ENCODE measurements at regions of chr1 and their contacts with region 1.

Region 1: DNA sequence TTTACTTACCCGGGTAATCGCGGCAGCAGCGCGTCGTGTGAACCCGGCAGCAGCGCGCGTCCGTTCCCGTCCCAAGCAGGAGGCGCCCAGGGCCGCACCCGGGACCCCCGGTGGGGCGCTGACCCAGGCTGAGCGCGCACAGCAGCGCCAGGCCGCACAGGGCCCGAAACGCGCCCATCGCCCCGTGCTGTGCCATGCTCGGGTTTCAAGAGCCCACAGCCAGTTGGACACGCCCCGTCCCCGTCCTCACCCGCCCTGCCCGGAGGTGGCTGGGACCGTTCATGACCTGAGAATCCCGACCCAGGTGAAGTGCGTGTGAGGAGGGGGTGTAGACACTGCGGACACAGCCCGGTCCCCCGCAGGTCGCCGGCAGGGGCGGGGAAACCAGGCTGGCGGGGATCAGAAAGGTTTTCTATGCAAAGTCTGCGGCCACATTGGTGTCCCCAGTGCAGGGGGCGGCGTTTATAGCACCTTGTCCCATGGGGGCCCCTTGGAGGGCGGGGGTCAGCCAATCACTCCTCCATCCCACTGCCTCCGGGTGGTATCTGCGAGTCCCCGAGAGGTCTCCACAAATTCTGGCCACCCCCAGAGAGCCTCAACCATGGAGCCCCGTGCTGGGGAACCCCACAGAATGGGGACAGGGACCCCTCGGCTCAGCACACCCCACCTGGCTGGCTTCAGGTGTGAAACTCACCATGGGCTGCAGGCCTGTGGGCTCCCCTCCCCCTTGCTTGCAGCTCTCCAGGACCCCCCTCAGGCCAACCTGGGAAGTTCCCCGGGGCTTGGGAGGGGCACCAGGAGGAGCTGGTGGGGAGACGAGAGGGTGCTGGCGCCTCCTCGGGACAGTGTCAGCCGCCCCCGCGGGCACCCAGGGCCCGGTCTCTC is at the start of gene TNFRSF18:
- DNase-seq: peak; percentile 47 to 64
- ATAC-seq: peak; percentile 11 to 17 (median 17)
- H3K4me3 ChIP-seq: peak within 1 kb of the TSS; percentile 41
- H3K4me3 Mint-ChIP-seq: peak within 1 kb of the TSS; percentile 80
- H3K27ac ChIP-seq: peak within 1 kb of the TSS; percentile 49
- H3K27ac Mint-ChIP-seq: peak within 1 kb of the TSS; percentile 93 to 98
- H3K4me1 ChIP-seq: peaks cover 73% of the 10 kb centered on the region
- H3K4me1 Mint-ChIP-seq: peaks cover 15 to 38% of the 10 kb centered on the region in 2 donors
- H3K27me3 ChIP-seq: no peaks in the 10 kb centered on the region
- H3K27me3 Mint-ChIP-seq: no peaks in the 10 kb centered on the region
- CTCF ChIP-seq: no peak
- total RNA-seq, gene TNFRSF18: 40.3 to 81.9 (median 54.7) TPM

Region 2: GRCh38 chr1:1173793-1174415 is 32.7 kb before region 1 on chr1 and contains the start of gene TTLL10:
- intact Hi-C with region 1: loop called (anchors 5 kb)
- DNase-seq: peak; percentile 37 to 80
- ATAC-seq: peak; percentile 38 to 76 (median 68)
- H3K4me3 ChIP-seq: no peak within 1 kb of the TSS
- H3K4me3 Mint-ChIP-seq: peak within 1 kb of the TSS; percentile 40
- H3K27ac ChIP-seq: no peak within 1 kb of the TSS
- H3K27ac Mint-ChIP-seq: no peak within 1 kb of the TSS
- H3K4me1 ChIP-seq: peaks cover 55% of the 10 kb centered on the region
- H3K4me1 Mint-ChIP-seq: peaks cover 4 to 12% of the 10 kb centered on the region in 2 donors
- H3K27me3 ChIP-seq: peaks cover 8% of the 10 kb centered on the region
- H3K27me3 Mint-ChIP-seq: peaks cover 0 to 23% of the 10 kb centered on the region in 2 donors
- CTCF ChIP-seq: no peak
- total RNA-seq, gene TTLL10: 0.23 to 1.7 (median 1.7) TPM

Region 3: DNA sequence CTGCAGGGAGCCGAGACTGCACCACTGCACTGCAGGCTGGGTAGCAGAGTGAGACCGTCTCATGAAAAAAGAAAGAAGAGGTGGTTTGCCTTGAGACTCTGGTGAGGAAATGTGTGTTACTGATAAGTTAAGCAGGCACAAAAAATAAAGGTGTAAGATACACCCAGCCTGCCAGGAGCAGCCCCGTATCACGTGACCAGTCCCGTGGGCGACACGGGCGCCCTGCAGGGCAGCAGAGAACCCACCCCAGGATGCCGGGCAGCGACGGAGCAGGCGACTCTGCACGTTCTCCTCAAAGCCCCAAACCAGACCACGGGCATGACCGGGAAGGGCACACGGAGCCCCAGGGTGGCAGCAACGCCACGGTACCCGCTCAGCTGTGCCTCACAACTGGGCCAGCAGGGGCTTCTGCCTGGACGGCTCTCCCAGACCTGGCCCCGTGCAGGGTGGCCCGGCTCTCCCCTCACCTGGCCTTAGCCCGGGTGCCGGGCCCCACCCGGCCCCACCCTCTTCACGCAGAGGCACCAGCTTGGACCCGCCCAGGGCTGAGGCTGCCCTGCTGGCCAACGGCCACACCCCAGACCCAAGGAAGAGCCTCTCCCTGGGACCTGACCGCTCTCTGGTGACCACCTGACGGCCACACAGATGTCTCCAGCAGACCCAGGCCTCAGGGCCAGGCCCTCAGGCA is 15.4 kb after region 1 on chr1:
- intact Hi-C with region 1: loop called (anchors 2 kb)
- DNase-seq: peak; percentile 28 to 59
- ATAC-seq: peak; percentile 68 to 73 (median 70)
- H3K4me3 ChIP-seq: no peak overlapping the region
- H3K4me3 Mint-ChIP-seq: peak overlapping the region; percentile 85
- H3K27ac ChIP-seq: peak overlapping the region; percentile 67
- H3K27ac Mint-ChIP-seq: peak overlapping the region; percentile 98 to 99
- H3K4me1 ChIP-seq: peaks cover 66% of the 10 kb centered on the region
- H3K4me1 Mint-ChIP-seq: peaks cover 18 to 55% of the 10 kb centered on the region in 2 donors
- H3K27me3 ChIP-seq: no peaks in the 10 kb centered on the region
- H3K27me3 Mint-ChIP-seq: no peaks in the 10 kb centered on the region
- CTCF ChIP-seq: no peak

Region 4: GRCh38 chr1:1337793-1338147 is 131.2 kb after region 1 on chr1:
- intact Hi-C with region 1: no loop called
- DNase-seq: peak in 1 of 2 donors; percentile 50
- ATAC-seq: peak in 1 of 3 donors; percentile 44
- H3K4me3 ChIP-seq: no peak overlapping the region
- H3K4me3 Mint-ChIP-seq: no peak overlapping the region
- H3K27ac ChIP-seq: no peak overlapping the region
- H3K27ac Mint-ChIP-seq: no peak overlapping the region
- H3K4me1 ChIP-seq: no peaks in the 10 kb centered on the region
- H3K4me1 Mint-ChIP-seq: no peaks in the 10 kb centered on the region
- H3K27me3 ChIP-seq: no peaks in the 10 kb centered on the region
- H3K27me3 Mint-ChIP-seq: no peaks in the 10 kb centered on the region
- CTCF ChIP-seq: no peak

Measured in natural killer cell (primary cell).